Endothelial cell of umbilical vein (primary cell): ENCODE measurements at regions of chr12 and their contacts with region 1.

Region 1: GRCh38 chr12:48924617-48925303 is 532 bp downstream of the FKBP11 start:
- DNase-seq: peak; percentile 78
- H3K4me3 ChIP-seq: peak overlapping the region; percentile 77 to 98 (median 86)
- H3K27ac ChIP-seq: peak overlapping the region; percentile 56
- H3K4me1 ChIP-seq: peaks cover 11% of the 10 kb centered on the region
- H3K27me3 ChIP-seq: no peaks in the 10 kb centered on the region
- CTCF ChIP-seq: peak; percentile 45 to 72
- POLR2A ChIP-seq: no peak

Region 2: GRCh38 chr12:47912556-47912955 is 1012.2 kb before region 1 on chr12:
- CTCF ChIA-PET with region 1: no interaction called
- POLR2A ChIA-PET with region 1: no interaction called
- dilution Hi-C with region 1: no loop called
- intact Hi-C with region 1: no loop called
- DNase-seq: no peak
- H3K4me3 ChIP-seq: no peak overlapping the region
- H3K27ac ChIP-seq: no peak overlapping the region
- H3K4me1 ChIP-seq: no peaks in the 10 kb centered on the region
- H3K27me3 ChIP-seq: peaks cover 25 to 31% of the 10 kb centered on the region in 2 experiments
- CTCF ChIP-seq: no peak
- POLR2A ChIP-seq: no peak

Region 3: GRCh38 chr12:48814262-48815125 is 110.3 kb before region 1 on chr12:
- CTCF ChIA-PET with region 1: no interaction called
- POLR2A ChIA-PET with region 1: no interaction called
- dilution Hi-C with region 1: no loop called
- intact Hi-C with region 1: no loop called
- DNase-seq: peak; percentile 73
- H3K4me3 ChIP-seq: peak overlapping the region; percentile 45 to 63 (median 54)
- H3K27ac ChIP-seq: peak overlapping the region; percentile 10
- H3K4me1 ChIP-seq: peaks cover 20% of the 10 kb centered on the region
- H3K27me3 ChIP-seq: no peaks in the 10 kb centered on the region
- CTCF ChIP-seq: peak; percentile 98 to 100
- POLR2A ChIP-seq: no peak

Region 4: DNA sequence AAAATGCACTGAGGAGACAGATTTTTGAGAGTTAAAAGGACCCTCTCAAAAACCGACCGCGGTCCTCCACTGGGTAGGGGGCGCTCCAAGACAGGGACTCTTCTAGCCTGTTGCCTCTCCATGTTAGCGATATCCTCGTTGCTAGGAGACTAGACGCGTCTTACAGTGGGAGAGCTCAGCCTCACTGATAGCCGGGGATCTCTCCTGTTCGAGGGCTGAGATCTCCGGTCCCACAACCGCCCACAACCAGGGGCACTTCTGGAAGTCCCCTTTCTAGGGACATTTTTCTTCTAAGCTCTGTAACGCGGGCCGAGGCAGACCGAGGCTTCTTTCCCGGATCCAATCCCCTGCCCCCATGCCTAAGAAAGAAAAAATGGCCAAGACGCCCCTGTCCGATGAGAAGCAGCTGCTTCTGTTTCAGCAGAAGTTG is 20.8 kb before region 1 on chr12:
- CTCF ChIA-PET with region 1: interaction called, 22 read pairs
- POLR2A ChIA-PET with region 1: no interaction called
- dilution Hi-C with region 1: no loop called
- intact Hi-C with region 1: no loop called
- DNase-seq: peak; percentile 76
- H3K4me3 ChIP-seq: peak overlapping the region in 2 of 3 experiments; percentile 32 to 46
- H3K27ac ChIP-seq: no peak overlapping the region
- H3K4me1 ChIP-seq: peaks cover 3% of the 10 kb centered on the region
- H3K27me3 ChIP-seq: no peaks in the 10 kb centered on the region
- CTCF ChIP-seq: peak; percentile 62 to 77
- POLR2A ChIP-seq: no peak

Region 5: GRCh38 chr12:48910196-48910595 is 14.6 kb before region 1 on chr12:
- CTCF ChIA-PET with region 1: interaction called, 22 read pairs
- POLR2A ChIA-PET with region 1: interaction called, 7 read pairs
- dilution Hi-C with region 1: no loop called
- intact Hi-C with region 1: no loop called
- DNase-seq: no peak
- H3K4me3 ChIP-seq: no peak overlapping the region
- H3K27ac ChIP-seq: no peak overlapping the region
- H3K4me1 ChIP-seq: no peaks in the 10 kb centered on the region
- H3K27me3 ChIP-seq: no peaks in the 10 kb centered on the region
- CTCF ChIP-seq: no peak
- POLR2A ChIP-seq: no peak

Region 6: DNA sequence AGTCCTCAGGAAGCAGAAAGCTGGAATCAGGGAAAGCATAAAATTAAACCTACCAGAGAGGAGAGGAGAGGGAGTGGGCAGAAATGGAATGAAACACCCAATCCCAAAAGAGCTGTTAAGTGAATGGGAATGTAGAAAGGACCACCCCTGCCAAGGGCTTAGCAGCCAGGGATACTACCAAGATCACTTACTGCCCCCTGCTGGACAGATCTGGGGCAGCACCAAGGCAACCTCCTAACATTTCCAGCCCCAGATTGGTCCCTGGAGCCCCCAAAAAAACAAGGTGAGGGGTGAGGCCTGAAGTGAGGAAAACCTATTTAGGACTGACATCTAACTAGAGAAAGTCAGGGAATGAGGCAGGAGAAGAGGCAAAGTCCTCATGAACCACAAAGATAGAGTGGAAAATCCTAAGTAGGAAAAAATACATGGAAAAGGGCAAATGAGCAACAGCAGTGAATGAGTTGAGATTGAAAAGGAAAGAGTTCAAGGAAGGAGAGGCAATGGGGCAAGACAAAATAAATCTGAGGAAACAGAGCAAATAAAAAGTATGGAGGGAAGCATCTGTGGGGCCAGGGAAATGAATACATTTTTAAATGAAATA is 11.7 kb after region 1 on chr12:
- CTCF ChIA-PET with region 1: interaction called, 39 read pairs
- POLR2A ChIA-PET with region 1: no interaction called
- dilution Hi-C with region 1: no loop called
- intact Hi-C with region 1: no loop called
- DNase-seq: peak; percentile 64
- H3K4me3 ChIP-seq: no peak overlapping the region
- H3K27ac ChIP-seq: no peak overlapping the region
- H3K4me1 ChIP-seq: no peaks in the 10 kb centered on the region
- H3K27me3 ChIP-seq: no peaks in the 10 kb centered on the region
- CTCF ChIP-seq: peak; percentile 86 to 92
- POLR2A ChIP-seq: no peak

Region 7: GRCh38 chr12:48957141-48958048 is 32.6 kb after region 1 on chr12 and contains the start of gene ARF3:
- CTCF ChIA-PET with region 1: interaction called, 3 read pairs
- POLR2A ChIA-PET with region 1: no interaction called
- dilution Hi-C with region 1: no loop called
- intact Hi-C with region 1: loop called (anchors 2 kb)
- DNase-seq: peak; percentile 94
- H3K4me3 ChIP-seq: peak within 1 kb of the TSS; percentile 71 to 99 (median 90)
- H3K27ac ChIP-seq: peak within 1 kb of the TSS; percentile 76
- H3K4me1 ChIP-seq: peaks cover 31% of the 10 kb centered on the region
- H3K27me3 ChIP-seq: no peaks in the 10 kb centered on the region
- CTCF ChIP-seq: no peak
- POLR2A ChIP-seq: peak; percentile 54
- total RNA-seq, gene ARF3: 172 and 187 TPM in 2 replicates

Region 8: GRCh38 chr12:48977315-48978281 is 52.8 kb after region 1 on chr12:
- CTCF ChIA-PET with region 1: interaction called, 8 read pairs
- POLR2A ChIA-PET with region 1: no interaction called
- dilution Hi-C with region 1: no loop called
- intact Hi-C with region 1: loop called (anchors 5 kb)
- DNase-seq: no peak
- H3K4me3 ChIP-seq: no peak overlapping the region
- H3K27ac ChIP-seq: no peak overlapping the region
- H3K4me1 ChIP-seq: peaks cover 13% of the 10 kb centered on the region
- H3K27me3 ChIP-seq: peaks cover 63 to 66% of the 10 kb centered on the region in 2 experiments
- CTCF ChIP-seq: peak; percentile 62 to 90
- POLR2A ChIP-seq: no peak

Region 9: DNA sequence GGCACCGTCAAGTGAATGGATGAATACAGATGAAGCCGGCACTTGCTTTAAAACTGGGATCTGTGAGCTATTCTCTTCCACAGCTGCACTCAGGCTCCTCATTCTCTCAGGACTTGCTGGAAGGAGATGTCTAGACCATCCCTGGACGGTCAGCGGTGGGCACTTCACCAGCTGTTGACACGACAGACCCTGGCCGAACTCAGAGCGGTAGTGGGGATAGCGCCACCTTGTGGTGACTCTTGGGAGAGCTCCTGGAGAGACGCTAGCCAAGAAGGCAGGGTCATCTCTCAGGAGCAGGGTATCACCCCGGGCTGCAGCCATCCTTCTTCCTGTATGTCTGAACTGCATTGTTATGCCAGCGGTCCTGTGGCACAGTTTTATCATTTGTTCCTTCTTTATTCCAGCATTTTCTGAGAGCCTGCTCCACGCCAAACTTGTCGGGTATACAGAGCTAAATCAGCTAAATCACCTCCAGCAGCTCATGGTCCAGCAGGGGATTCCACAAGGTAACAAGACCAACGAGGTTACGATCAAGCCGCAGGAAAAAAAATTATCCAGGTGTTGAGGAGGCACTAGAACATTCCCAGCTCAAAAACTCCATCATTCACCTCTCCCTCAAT is 63.4 kb after region 1 on chr12:
- CTCF ChIA-PET with region 1: interaction called, 20 read pairs
- POLR2A ChIA-PET with region 1: no interaction called
- dilution Hi-C with region 1: no loop called
- intact Hi-C with region 1: loop called (anchors 5 kb)
- DNase-seq: peak; percentile 61
- H3K4me3 ChIP-seq: no peak overlapping the region
- H3K27ac ChIP-seq: no peak overlapping the region
- H3K4me1 ChIP-seq: no peaks in the 10 kb centered on the region
- H3K27me3 ChIP-seq: peaks cover 53 to 60% of the 10 kb centered on the region in 2 experiments
- CTCF ChIP-seq: peak; percentile 92 to 93
- POLR2A ChIP-seq: no peak